Psoas muscle (tissue), 8 donors: ENCODE measurements at regions of chr3 and their contacts with region 1.

Region 1: DNA sequence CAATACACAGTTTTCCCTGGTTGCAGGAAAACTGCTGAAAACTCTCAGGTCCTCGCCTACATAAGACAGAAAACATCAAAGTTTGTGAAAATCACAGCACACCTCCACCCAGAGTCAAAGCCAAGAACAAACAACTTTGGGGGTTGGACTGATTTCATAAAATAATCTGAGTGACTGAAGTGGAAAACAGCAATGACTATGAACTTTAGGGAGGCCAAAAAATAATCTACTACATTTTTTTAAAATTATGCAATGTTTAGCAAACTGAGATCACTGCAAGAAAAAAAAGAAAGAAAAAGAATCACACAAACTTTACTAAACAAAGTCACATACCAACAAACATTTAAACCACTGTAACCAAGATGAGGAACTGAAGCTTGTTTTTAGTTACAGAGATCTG is 15.9 kb upstream of the FOXP1 start:
- DNase-seq: no peak
- ATAC-seq: no peak
- H3K4me3 ChIP-seq: no peak overlapping the region
- H3K27ac ChIP-seq: no peak overlapping the region
- H3K4me1 ChIP-seq: no peaks in the 10 kb centered on the region
- H3K27me3 ChIP-seq: no peaks in the 10 kb centered on the region
- CTCF ChIP-seq: no peak

Region 2: DNA sequence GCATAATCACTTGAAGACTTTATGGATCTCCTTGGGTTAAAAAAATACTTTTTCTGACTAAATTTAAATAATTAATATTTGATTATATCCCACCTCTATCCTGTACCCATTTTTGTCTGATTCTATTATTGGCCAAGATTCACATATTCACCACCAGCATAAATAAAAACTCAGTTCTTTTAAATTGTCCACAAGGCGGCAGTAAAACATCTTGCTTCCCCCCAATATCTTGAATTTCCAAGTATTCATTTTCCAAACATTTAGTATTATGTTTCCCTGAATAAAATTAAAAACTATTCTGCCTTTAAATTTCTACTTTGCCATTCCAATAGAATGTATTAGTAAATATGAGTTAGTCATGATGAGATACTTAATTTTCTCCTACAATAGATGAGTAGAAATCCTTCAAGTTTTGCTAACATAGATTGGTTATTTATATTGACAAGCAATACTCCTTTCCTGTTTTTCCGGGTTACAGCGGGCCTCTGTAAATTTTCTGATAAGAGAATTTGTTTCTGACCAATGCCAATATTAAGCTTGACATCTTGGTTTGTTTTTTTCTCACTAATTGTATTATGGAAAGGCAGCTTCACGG is 1068.3 kb before region 1 on chr3:
- intact Hi-C with region 1: loop called in 1 of 2 experiments (anchors 10 kb)
- DNase-seq: no peak
- ATAC-seq: no peak
- H3K4me3 ChIP-seq: no peak overlapping the region
- H3K27ac ChIP-seq: no peak overlapping the region
- H3K4me1 ChIP-seq: no peaks in the 10 kb centered on the region
- H3K27me3 ChIP-seq: no peaks in the 10 kb centered on the region
- CTCF ChIP-seq: peak; percentile 42

Region 3: DNA sequence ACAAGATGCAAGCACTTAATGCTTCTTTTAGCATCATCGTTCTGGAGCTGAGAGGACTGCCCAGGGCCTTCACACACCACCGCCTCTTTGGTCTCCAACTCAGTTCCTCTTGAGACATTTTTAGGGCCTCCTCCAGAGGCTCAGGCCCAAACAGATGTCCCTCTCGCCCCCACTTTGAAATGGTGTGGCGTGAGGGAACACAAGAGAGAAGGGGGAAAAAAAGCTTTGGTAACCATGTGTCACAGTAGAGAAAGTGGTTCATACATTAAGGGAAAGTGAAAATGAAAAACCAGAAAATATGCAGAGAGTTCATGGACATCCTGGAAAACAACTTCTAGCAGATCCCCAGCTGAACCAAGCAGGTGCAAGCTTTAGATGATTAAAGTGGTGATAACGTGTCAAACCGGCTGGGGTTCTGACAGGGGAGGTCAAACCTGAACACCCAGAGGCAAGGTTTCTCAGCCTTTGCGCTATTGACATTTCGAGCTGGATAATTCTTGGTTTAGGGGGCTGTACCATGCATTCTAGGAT is 17.2 kb after region 1 on chr3:
- intact Hi-C with region 1: no loop called
- DNase-seq: no peak
- ATAC-seq: no peak
- H3K4me3 ChIP-seq: no peak overlapping the region
- H3K27ac ChIP-seq: no peak overlapping the region
- H3K4me1 ChIP-seq: no peaks in the 10 kb centered on the region
- H3K27me3 ChIP-seq: peaks cover 0 to 2% (median 0%) of the 10 kb centered on the region in 3 donors
- CTCF ChIP-seq: no peak